Activated B cell treated with CpG ODN at 0.5 μM for 24 hours (primary cell): ENCODE measurements at regions of chr10 and their contacts with region 1.

Region 1: DNA sequence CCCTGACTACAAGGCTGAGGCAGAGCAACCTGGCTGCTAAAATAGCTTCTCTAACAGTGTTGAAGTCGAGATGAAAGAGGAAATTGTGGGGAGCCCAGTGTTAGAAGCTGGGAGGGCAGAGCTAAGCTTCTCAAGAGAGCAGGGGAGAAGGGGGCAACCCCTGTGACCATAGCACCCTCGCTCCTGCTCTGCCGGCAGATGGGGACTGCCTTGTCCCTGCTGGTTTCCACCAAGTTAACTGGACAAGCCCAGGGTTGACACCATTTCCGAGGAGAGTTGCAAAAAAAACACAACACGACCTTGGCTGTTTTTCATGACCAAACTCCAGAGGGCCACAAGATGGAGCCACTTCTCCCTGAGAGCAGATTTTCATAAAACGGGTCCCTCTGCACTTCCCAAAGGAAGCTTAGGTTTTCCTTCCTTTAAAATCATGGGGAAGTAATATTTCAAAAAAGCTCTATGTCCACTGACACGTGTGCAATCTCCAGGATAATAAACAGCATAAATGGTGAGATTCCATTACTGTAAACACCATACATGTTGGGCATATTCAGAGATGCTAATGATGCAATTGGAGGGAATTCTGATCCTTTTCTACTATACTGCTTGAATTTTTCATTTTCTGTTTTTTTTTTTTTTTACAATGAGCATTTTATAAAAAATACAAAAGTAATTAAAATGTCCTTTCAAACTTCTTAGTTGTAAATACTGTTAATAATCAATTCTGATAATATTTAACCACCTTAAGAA is 140.4 kb downstream of the PIP4K2A start:
- DNase-seq: no peak
- ATAC-seq: peak; percentile 34
- H3K4me3 Mint-ChIP-seq: no peak overlapping the region
- H3K27ac Mint-ChIP-seq: peak overlapping the region; percentile 63
- H3K4me1 Mint-ChIP-seq: peaks cover 8% of the 10 kb centered on the region
- H3K27me3 Mint-ChIP-seq: no peaks in the 10 kb centered on the region
- CTCF ChIP-seq: no peak

Region 2: GRCh38 chr10:22345301-22346095 is 228.5 kb before region 1 on chr10 and contains the start of gene SPAG6:
- CTCF ChIA-PET with region 1: no interaction called
- POLR2A ChIA-PET with region 1: no interaction called
- intact Hi-C with region 1: no loop called
- DNase-seq: peak; percentile 50
- ATAC-seq: peak; percentile 15
- H3K4me3 Mint-ChIP-seq: peak within 1 kb of the TSS; percentile 52
- H3K27ac Mint-ChIP-seq: peak within 1 kb of the TSS; percentile 50
- H3K4me1 Mint-ChIP-seq: peaks cover 19% of the 10 kb centered on the region
- H3K27me3 Mint-ChIP-seq: peaks cover 44% of the 10 kb centered on the region
- CTCF ChIP-seq: no peak
- total RNA-seq, gene SPAG6: 0.12 and 0.62 TPM in 2 replicates

Region 3: DNA sequence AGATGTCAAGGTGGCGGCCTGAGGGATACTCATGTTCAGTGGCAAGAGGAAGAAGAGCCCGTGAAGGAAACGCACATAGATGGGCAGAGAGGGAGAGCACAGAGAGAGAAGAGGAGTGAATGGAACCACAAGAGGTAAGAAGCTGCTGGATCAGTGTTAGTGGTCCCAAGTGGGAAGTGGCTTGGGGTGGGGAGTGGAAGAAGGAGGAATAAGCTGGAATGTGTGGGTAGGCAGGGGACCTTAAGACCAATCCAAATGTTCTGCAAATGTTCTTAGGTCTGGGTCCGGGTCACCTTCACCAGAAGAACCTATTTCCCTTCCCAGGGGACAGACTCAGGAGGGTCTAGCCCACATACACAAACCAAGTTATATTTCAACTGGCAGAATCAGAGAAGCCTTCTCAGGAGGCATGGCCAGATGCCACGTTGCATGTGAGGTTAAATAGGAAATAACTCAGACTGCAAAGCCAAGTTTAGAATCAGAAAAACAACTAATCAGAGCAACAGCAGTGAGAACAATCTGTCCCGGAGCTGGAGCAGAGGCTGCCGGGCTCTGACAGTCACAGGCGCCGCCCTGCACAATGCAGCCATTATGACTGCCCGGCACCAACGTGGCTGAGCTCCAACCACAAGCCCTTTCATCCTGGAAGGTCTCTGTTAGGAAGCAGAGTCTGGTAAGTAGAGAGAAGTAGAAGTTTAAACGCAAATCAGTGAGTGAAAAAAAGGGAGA is 275.2 kb after region 1 on chr10:
- CTCF ChIA-PET with region 1: no interaction called
- POLR2A ChIA-PET with region 1: no interaction called
- intact Hi-C with region 1: loop called (anchors 5 kb)
- DNase-seq: no peak
- ATAC-seq: no peak
- H3K4me3 Mint-ChIP-seq: no peak overlapping the region
- H3K27ac Mint-ChIP-seq: no peak overlapping the region
- H3K4me1 Mint-ChIP-seq: peaks cover 11% of the 10 kb centered on the region
- H3K27me3 Mint-ChIP-seq: no peaks in the 10 kb centered on the region
- CTCF ChIP-seq: no peak

Region 4: GRCh38 chr10:22980822-22981221 is 406.8 kb after region 1 on chr10:
- CTCF ChIA-PET with region 1: interaction called, 75 read pairs
- POLR2A ChIA-PET with region 1: no interaction called
- intact Hi-C with region 1: no loop called
- DNase-seq: no peak
- ATAC-seq: no peak
- H3K4me3 Mint-ChIP-seq: no peak overlapping the region
- H3K27ac Mint-ChIP-seq: no peak overlapping the region
- H3K4me1 Mint-ChIP-seq: no peaks in the 10 kb centered on the region
- H3K27me3 Mint-ChIP-seq: peaks cover 2% of the 10 kb centered on the region
- CTCF ChIP-seq: no peak